ENCODE measurements at regions of chr2 and their contacts with region 1.

Region 1: GRCh38 chr2:15271941-15272542 is 289.1 kb downstream of the NBAS start:
- DNase-seq: no peak
- ATAC-seq: no peak
- H3K4me3 ChIP-seq: no peak overlapping the region
- H3K4me3 Mint-ChIP-seq: no peak overlapping the region
- H3K27ac ChIP-seq: no peak overlapping the region
- H3K27ac Mint-ChIP-seq: no peak overlapping the region
- H3K4me1 ChIP-seq: no peaks in the 10 kb centered on the region
- H3K4me1 Mint-ChIP-seq: no peaks in the 10 kb centered on the region
- H3K27me3 ChIP-seq: no peaks in the 10 kb centered on the region
- H3K27me3 Mint-ChIP-seq: no peaks in the 10 kb centered on the region
- CTCF ChIP-seq: no peak

Region 2: DNA sequence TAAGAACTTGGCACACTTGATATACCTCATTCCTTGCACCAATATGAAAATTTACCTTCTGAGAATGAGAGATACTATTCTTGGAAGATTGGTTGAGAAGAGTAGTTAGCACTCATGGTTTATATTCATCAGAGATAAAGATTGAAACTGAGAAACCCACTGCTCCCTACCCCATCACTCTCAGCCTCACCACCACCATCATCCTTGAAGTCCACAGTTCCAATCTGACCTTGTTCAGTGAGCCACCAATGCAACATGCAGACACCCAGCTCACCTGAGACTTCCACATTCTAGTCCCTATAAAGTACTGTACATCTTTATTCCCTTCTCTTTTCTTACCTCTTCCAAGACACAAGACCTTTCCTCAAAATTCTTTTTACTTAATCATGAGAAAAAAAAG is 1686.3 kb before region 1 on chr2:
- CTCF ChIA-PET with region 1: no interaction called
- POLR2A ChIA-PET with region 1: no interaction called
- intact Hi-C with region 1: no loop called
- DNase-seq: no peak
- ATAC-seq: no peak
- H3K4me3 ChIP-seq: no peak overlapping the region
- H3K4me3 Mint-ChIP-seq: no peak overlapping the region
- H3K27ac ChIP-seq: no peak overlapping the region
- H3K27ac Mint-ChIP-seq: no peak overlapping the region
- H3K4me1 ChIP-seq: no peaks in the 10 kb centered on the region
- H3K4me1 Mint-ChIP-seq: no peaks in the 10 kb centered on the region
- H3K27me3 ChIP-seq: no peaks in the 10 kb centered on the region
- H3K27me3 Mint-ChIP-seq: no peaks in the 10 kb centered on the region
- CTCF ChIP-seq: no peak

Region 3: GRCh38 chr2:15195818-15196217 is 76.2 kb before region 1 on chr2:
- CTCF ChIA-PET with region 1: no interaction called
- POLR2A ChIA-PET with region 1: no interaction called
- intact Hi-C with region 1: no loop called
- DNase-seq: no peak
- ATAC-seq: no peak
- H3K4me3 ChIP-seq: no peak overlapping the region
- H3K4me3 Mint-ChIP-seq: no peak overlapping the region
- H3K27ac ChIP-seq: no peak overlapping the region
- H3K27ac Mint-ChIP-seq: no peak overlapping the region
- H3K4me1 ChIP-seq: no peaks in the 10 kb centered on the region
- H3K4me1 Mint-ChIP-seq: no peaks in the 10 kb centered on the region
- H3K27me3 ChIP-seq: no peaks in the 10 kb centered on the region
- H3K27me3 Mint-ChIP-seq: no peaks in the 10 kb centered on the region
- CTCF ChIP-seq: no peak

Region 4: DNA sequence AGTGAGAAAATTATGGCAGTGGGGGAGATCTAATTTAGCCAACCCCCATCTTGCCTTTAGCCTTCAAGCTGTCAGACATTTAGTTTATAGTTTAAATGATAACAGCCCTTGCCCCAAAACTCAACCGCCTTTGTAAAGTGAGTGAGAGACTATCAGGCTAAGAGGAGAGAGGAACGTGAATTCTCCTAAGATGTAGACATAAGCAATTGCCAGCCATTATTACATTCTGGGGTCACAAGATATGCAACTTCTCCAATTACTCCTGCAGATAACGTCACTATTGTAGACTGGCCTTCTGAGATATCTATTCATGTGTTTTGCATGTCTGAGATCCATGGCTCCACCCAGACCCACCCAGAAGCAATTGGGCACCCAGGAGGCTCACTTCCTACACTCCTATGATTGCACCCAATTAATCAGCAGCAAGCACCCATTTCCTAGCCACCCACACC is 18.2 kb before region 1 on chr2:
- CTCF ChIA-PET with region 1: no interaction called
- POLR2A ChIA-PET with region 1: no interaction called
- intact Hi-C with region 1: loop called in 1 of 2 experiments (anchors 1 kb)
- DNase-seq: no peak
- ATAC-seq: no peak
- H3K4me3 ChIP-seq: no peak overlapping the region
- H3K4me3 Mint-ChIP-seq: no peak overlapping the region
- H3K27ac ChIP-seq: no peak overlapping the region
- H3K27ac Mint-ChIP-seq: no peak overlapping the region
- H3K4me1 ChIP-seq: no peaks in the 10 kb centered on the region
- H3K4me1 Mint-ChIP-seq: peaks cover 2% of the 10 kb centered on the region
- H3K27me3 ChIP-seq: no peaks in the 10 kb centered on the region
- H3K27me3 Mint-ChIP-seq: no peaks in the 10 kb centered on the region
- CTCF ChIP-seq: no peak

Region 5: DNA sequence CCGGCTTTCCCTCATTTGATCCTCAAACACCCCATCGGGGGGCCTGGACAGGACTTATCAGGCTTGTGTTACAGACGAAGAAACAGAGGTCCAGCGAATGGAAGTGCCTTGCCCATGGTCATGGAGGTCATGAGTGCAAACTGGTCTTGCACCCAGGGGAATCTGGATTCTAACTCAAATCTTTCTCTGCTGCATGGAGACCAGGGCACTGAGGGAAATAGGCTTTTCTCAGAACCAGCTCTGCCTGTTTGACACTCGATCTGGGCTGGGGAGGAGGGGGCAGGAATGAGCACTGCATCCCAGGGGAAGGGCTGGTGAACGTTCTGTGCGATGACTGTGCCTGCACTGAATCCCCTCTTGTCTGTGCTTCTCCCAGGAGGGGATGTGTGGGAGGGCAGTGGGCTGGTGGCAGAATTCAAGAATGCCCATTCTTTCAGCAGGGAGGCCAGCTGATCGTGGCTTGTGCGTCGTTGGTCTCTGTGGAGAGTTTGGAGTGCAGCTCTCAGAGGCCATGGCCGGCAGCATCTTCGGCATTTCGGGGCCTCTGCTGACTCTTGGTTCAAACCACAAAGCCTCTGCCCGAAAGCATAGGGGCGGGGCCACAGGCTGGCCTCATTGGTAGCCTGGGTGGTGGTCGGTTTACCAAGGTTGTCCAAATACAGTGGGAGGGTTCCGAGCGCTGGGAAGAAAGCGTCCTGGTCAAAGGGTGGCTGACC is 491.2 kb after region 1 on chr2:
- CTCF ChIA-PET with region 1: no interaction called
- POLR2A ChIA-PET with region 1: no interaction called
- intact Hi-C with region 1: no loop called
- DNase-seq: no peak
- ATAC-seq: no peak
- H3K4me3 ChIP-seq: no peak overlapping the region
- H3K4me3 Mint-ChIP-seq: no peak overlapping the region
- H3K27ac ChIP-seq: no peak overlapping the region
- H3K27ac Mint-ChIP-seq: no peak overlapping the region
- H3K4me1 ChIP-seq: no peaks in the 10 kb centered on the region
- H3K4me1 Mint-ChIP-seq: no peaks in the 10 kb centered on the region
- H3K27me3 ChIP-seq: no peaks in the 10 kb centered on the region
- H3K27me3 Mint-ChIP-seq: no peaks in the 10 kb centered on the region
- CTCF ChIP-seq: no peak

Measured in CD8-positive, alpha-beta T cell (primary cell).